ENCODE measurements at regions of chr1 and their contacts with region 1.

Region 1: GRCh38 chr1:35726450-35727433 is 8.1 kb upstream of the C1orf216 start:
- DNase-seq: peak; percentile 42 to 46
- H3K4me3 ChIP-seq: no peak overlapping the region
- H3K27ac ChIP-seq: no peak overlapping the region
- H3K4me1 ChIP-seq: no peaks in the 10 kb centered on the region
- H3K27me3 ChIP-seq: no peaks in the 10 kb centered on the region
- CTCF ChIP-seq: peak; percentile 84

Region 2: DNA sequence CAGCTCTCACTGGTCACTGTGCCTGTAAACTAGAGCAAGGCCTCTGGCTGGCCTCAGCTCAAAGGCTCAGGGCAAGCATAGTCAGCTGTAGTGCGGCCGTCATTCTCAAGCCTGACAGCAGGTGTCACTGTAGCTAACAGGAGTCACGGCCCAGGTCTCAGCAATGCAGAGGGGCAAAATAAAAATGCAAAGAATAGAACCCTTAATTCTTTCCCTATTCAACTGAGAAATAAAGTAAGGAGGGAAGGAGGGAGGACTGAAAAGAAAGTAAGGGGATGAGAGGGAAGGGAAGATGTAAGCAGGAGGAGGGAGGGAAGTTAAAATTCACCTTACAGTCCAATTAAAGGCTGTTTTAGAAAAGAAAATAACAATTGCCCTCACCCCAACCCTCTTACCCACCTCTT is 275.6 kb before region 1 on chr1:
- CTCF ChIA-PET with region 1: interaction called, 3 read pairs
- POLR2A ChIA-PET with region 1: no interaction called
- intact Hi-C with region 1: loop called (anchors 2 kb)
- DNase-seq: peak; percentile 47 to 72
- H3K4me3 ChIP-seq: no peak overlapping the region
- H3K27ac ChIP-seq: no peak overlapping the region
- H3K4me1 ChIP-seq: peaks cover 19% of the 10 kb centered on the region
- H3K27me3 ChIP-seq: no peaks in the 10 kb centered on the region
- CTCF ChIP-seq: peak; percentile 89

Region 3: DNA sequence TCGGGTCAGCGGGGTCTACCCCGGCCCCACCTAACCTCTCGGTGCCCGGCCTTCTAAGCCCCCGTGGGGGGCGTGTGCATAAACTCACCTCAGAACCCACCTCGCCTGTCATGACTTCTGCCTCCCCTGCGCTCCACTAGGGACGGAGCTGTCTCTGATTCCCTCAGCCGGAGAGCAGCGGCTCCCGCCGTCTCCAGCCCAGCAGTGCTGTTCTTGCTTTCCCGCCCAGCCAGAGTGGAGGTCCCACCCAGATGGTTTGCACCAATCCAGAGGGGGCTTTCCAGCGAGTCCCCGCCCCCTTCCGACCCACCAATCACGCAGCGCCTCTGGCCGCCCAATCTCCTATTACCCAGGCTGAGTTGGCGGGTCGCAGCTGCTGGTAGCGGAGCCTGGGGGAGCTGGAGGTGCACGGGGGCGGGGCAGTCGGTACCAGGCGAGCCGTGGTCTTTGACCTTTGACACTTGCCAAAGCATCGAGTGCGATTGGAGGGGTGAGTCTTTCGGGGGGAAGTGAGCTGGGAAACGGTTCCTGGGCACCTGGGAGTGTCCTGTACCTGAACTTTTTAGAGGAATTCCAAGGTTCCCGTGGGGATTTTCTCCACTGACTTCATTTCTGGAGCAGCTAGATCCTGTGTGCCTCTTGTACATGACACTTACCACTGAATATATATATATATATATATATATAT is 43.2 kb after region 1 on chr1 and contains the start of gene CLSPN:
- CTCF ChIA-PET with region 1: interaction called, 17 read pairs
- POLR2A ChIA-PET with region 1: interaction called, 7 read pairs
- intact Hi-C with region 1: loop called (anchors 5 kb)
- DNase-seq: peak; percentile 90 to 98
- H3K4me3 ChIP-seq: peak within 1 kb of the TSS; percentile 99
- H3K27ac ChIP-seq: no peak within 1 kb of the TSS
- H3K4me1 ChIP-seq: peaks cover 5% of the 10 kb centered on the region; the same call in 1 of the 2 replicates
- H3K27me3 ChIP-seq: no peaks in the 10 kb centered on the region
- CTCF ChIP-seq: no peak
- total RNA-seq, gene CLSPN: 18.9 and 26.7 TPM in 2 replicates

Region 4: DNA sequence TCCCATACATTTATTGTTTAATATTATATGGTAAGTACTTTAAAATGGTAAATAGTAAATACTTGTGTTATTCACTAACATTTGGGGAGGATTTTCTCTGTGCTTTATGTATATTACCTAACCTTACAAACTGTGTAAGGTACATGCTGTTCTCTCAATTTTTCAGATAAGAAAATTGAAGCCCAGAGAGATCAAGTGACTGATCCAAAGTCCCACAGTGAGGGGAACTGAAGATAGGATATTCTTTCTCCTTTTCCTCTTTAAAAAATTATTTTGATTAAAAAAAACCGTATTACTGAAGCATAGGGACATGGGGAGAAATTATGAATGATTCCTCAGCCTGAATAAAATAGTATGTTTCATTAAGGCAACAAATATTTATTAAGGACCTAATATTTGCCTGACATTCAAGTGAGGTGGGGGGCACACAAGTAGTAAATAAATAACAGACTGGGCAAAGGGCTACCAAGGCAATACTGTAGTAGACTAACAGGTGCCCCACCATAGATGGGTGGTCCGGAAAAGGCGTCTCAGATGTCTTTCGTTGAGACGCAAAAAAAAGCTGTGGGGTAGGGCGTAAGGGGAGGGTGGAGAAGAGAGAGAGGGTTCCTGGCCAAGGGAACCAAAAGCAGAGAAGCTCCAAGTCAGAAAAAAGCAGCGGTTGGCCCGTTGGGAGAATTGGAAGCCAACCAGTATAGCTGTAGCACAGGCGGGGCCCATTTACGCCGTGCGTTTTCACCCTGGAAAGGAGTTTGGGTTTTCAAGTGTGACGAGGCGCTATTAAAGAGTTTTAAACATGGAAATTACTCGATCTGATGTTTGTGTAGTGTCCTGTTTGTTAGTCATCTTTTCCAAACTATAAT is 203.2 kb after region 1 on chr1:
- CTCF ChIA-PET with region 1: no interaction called
- POLR2A ChIA-PET with region 1: no interaction called
- intact Hi-C with region 1: no loop called
- DNase-seq: peak; percentile 47 to 55
- H3K4me3 ChIP-seq: peak overlapping the region; percentile 87
- H3K27ac ChIP-seq: peak overlapping the region; percentile 90
- H3K4me1 ChIP-seq: peaks cover 30% of the 10 kb centered on the region
- H3K27me3 ChIP-seq: no peaks in the 10 kb centered on the region
- CTCF ChIP-seq: no peak

Measured in PC-9 (cell line).